ENCODE measurements at regions of chr20 and their contacts with region 1.

Region 1: GRCh38 chr20:25453035-25453810 is 45.8 kb downstream of the GINS1 start:
- DNase-seq: peak; percentile 20
- ATAC-seq: peak; percentile 62
- H3K4me3 ChIP-seq: no peak overlapping the region
- H3K27ac ChIP-seq: no peak overlapping the region
- H3K4me1 ChIP-seq: peaks cover 6% of the 10 kb centered on the region
- H3K27me3 ChIP-seq: no peaks in the 10 kb centered on the region
- CTCF ChIP-seq: no peak

Region 2: DNA sequence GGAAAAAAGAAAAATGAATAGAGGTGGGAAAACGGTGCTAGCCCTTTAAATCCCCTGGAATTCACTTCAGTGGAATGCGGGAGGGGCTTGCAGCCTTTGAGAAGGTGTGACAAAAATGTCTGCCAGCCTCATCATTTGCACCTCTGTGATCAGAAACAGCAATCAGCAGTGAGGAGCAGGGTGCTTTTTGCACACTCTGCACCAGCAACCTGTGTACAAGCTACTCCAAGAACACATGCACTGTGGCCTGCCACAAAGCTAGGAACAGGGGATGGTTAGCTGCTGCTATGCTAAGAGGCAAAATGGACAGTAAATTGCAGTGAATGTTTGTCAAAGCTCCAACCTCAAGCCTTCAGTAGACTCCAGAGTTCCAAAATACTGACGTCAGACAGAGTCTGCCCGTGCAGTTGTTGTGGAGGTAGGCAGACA is 16.1 kb before region 1 on chr20:
- CTCF ChIA-PET with region 1: no interaction called
- POLR2A ChIA-PET with region 1: no interaction called
- in situ Hi-C with region 1: no loop called
- intact Hi-C with region 1: no loop called
- DNase-seq: no peak
- ATAC-seq: no peak
- H3K4me3 ChIP-seq: no peak overlapping the region
- H3K27ac ChIP-seq: no peak overlapping the region
- H3K4me1 ChIP-seq: no peaks in the 10 kb centered on the region
- H3K27me3 ChIP-seq: no peaks in the 10 kb centered on the region
- CTCF ChIP-seq: no peak

Region 3: DNA sequence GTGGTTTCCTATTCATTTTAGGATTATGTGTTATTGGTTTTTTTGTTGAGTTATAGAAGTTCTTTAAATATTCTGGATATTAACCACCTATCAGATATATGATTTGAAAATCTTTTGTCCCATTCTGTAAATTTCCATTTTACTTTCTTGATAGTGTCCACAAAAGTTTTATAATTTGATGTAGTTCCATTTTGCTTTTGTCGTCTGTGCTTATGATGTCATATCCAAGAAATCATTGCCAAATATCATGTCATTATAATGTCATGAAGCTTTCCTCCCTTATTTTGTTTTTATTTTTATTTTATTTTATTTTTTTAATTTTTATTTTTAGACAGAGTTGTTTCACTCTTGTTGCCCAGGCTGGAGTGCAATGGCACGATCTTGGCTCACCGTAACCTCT is 191.6 kb after region 1 on chr20:
- CTCF ChIA-PET with region 1: no interaction called
- POLR2A ChIA-PET with region 1: no interaction called
- in situ Hi-C with region 1: no loop called
- intact Hi-C with region 1: no loop called
- DNase-seq: no peak
- ATAC-seq: no peak
- H3K4me3 ChIP-seq: no peak overlapping the region
- H3K27ac ChIP-seq: no peak overlapping the region
- H3K4me1 ChIP-seq: no peaks in the 10 kb centered on the region
- H3K27me3 ChIP-seq: no peaks in the 10 kb centered on the region
- CTCF ChIP-seq: no peak

Region 4: GRCh38 chr20:25739615-25740320 is 286.5 kb after region 1 on chr20:
- CTCF ChIA-PET with region 1: no interaction called
- POLR2A ChIA-PET with region 1: interaction called, 13 read pairs
- in situ Hi-C with region 1: no loop called
- intact Hi-C with region 1: no loop called
- DNase-seq: peak; percentile 7
- ATAC-seq: no peak
- H3K4me3 ChIP-seq: no peak overlapping the region
- H3K27ac ChIP-seq: no peak overlapping the region
- H3K4me1 ChIP-seq: no peaks in the 10 kb centered on the region
- H3K27me3 ChIP-seq: no peaks in the 10 kb centered on the region
- CTCF ChIP-seq: no peak